ENCODE measurements at regions of chr21 and their contacts with region 1.

Region 1: DNA sequence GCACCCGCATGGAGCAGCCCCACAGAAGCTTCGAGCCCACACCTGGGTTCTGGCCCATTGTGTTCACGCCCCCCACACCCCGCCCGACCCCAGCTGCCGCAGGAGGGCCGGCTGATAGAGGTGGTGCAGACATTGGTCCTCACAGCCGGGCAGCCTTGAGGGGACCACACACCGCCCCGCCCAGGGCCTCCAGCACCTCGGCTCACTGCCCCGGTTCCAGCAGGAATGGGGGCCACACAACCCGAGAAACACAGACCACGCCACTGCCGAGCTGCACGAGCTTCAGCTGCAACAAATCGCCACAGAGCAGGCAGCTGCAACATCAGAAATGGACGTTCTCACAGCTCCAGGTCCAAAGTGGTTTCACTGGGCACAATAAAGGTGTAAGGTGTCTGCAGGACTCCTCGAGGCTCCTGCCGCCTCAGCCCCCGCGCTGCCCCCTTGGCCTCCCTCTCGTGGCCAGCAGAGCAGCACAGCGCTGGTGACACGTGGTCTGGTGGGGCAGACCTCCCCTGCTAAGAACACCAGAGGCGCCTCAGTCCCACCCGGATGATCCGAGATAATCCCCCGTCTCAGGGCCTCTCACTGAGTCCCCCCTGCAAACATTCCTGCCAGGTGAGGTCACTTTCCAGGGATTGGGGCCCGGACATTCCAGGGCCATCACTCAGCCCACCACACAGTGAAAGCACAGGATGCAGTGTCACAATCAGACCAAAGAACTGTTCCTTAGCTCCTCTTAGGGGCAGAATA is 62.3 kb upstream of the ADARB1 start:
- DNase-seq: peak; percentile 82 to 84
- H3K4me3 ChIP-seq: peak overlapping the region in 1 of 4 experiments; percentile 32; a peak in 4 of 8 replicates
- H3K27ac ChIP-seq: peak overlapping the region; percentile 21; the same call in 1 of the 2 replicates
- H3K4me1 ChIP-seq: peaks cover 0 to 26% (median 12%) of the 10 kb centered on the region in 4 experiments; a peak in 6 of 7 replicates
- H3K27me3 ChIP-seq: peaks cover 0 to 9% (median 6%) of the 10 kb centered on the region in 4 experiments; a peak in 4 of 7 replicates
- CTCF ChIP-seq: peak in 2 of 3 experiments; percentile 10 to 26; a peak in 1 of 4 replicates
- EP300 ChIP-seq: no peak
- POLR2A ChIP-seq: no peak
- RAD21 ChIP-seq: peak in 1 of 2 experiments; percentile 25; a peak in 2 of 4 replicates

Region 2: DNA sequence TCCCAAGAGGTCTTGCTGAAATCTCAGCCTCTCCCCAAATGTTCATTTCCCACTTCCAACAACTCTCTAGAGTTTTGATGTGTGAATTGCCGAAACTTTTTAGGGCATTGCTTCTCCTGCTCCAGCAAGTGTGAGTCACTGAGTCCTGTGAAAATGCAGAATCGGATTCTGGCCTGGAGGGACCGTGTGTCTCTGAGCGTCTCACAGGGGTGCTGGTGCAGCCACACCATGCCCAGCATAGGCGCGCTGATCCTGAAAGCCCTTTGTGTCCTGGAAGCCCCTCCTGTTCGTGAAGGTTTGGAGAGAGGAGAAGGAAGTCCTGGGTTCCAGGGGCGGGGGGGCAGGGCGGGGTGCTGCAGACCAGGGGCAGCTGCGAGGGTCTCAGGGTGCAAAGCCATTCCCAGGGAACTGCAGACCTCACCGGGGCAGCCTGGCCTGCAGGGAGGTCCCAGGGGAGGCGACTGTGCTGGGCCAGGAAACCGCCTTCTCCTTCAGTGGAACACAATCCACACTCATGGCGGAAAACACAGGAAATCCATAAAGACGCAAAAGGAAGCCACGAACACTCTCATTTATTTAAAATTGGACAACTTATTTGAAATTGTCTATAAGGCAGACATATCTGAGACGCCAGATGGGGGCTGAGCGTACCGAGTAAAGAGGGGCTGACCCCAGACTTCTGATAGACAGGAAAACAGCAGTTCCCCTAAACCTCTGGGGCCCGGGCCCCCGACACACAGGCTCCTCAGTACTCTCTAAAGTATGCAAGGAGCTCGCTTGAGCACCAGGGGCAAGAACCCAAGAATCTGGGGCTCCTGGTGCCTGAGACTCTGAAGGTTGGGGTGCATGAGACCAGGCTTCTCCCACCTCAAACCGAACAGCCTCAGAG is 18.8 kb after region 1 on chr21:
- CTCF ChIA-PET with region 1: interaction called, 13 read pairs
- POLR2A ChIA-PET with region 1: interaction called, 5 read pairs
- DNase-seq: peak in 1 of 2 experiments; percentile 47
- H3K4me3 ChIP-seq: peak overlapping the region in 1 of 4 experiments; percentile 27; a peak in 2 of 8 replicates
- H3K27ac ChIP-seq: no peak overlapping the region
- H3K4me1 ChIP-seq: peaks cover 7 to 36% (median 29%) of the 10 kb centered on the region in 4 experiments
- H3K27me3 ChIP-seq: peaks cover 0 to 6% (median 3%) of the 10 kb centered on the region in 4 experiments; a peak in 3 of 7 replicates
- CTCF ChIP-seq: no peak
- EP300 ChIP-seq: no peak
- POLR2A ChIP-seq: no peak
- RAD21 ChIP-seq: no peak

Region 3: DNA sequence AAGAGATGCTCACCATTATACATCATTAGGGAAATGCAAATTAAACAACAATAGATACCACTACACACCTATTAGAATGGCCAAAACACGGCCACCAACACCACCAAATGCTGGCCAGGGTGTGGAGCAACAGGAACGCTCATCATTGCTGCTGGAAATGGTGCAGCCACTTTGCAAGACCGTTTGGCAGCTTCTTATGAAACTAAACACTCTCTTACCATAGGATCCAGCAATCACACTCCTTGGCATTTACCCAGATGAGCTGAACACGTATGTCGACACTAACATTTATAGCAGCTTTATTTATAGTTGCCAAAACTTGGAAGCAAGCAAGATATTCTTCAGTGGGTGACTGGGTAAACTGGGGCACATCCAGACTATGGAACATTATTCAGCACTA is 33.4 kb after region 1 on chr21:
- CTCF ChIA-PET with region 1: no interaction called
- POLR2A ChIA-PET with region 1: no interaction called
- DNase-seq: no peak
- H3K4me3 ChIP-seq: no peak overlapping the region
- H3K27ac ChIP-seq: no peak overlapping the region
- H3K4me1 ChIP-seq: peaks cover 0 to 5% (median 3%) of the 10 kb centered on the region in 4 experiments; a peak in 3 of 7 replicates
- H3K27me3 ChIP-seq: peaks cover 0 to 1% (median 0%) of the 10 kb centered on the region in 4 experiments; a peak in 1 of 7 replicates
- CTCF ChIP-seq: no peak
- EP300 ChIP-seq: no peak
- POLR2A ChIP-seq: no peak
- RAD21 ChIP-seq: no peak

Measured in H1 (cell line).